Common myeloid progenitor, CD34-positive (primary cell): ENCODE measurements at regions of chr10 and their contacts with region 1.

Region 1: DNA sequence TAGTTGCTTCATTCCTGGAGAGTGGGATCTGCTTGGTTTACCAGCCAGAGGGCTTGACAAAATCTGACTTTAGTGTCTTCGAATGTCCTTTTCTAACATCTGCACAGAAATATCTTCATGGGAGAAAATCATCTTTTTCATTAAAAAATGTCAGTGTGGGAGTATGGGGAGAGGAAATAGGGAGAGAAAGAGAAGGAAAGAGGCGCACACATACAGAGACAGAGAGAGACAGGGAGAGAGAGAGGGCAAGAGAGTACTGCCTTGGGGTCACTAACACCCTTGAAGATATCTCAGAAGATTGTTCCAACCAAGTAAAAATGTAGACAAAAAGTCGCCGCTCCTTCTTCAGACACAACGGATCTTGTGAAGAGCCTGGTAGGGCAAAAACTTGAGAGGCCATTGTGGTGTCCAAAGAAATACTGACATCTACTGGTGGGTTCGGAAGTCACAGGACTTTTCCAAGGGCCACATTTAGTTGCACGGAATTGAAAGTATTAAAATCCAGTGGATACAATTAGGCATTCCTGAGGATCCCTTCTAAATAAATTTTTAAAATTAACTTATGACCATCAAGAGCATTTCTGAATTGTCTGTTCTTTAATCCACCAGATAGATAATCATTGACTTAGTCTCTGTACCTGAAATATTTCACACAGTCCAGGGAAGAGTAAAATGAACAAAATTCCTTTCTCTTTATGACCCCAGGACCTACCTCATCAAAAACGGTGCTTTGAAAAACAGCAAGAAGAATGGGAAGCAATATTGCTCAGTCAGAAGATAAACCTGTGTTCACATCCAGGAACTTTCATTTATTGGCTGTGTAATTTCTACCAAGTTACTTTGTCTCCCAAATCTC is 29.7 kb downstream of the VIM start:
- DNase-seq: peak; percentile 64 to 85 (median 79)
- H3K4me3 ChIP-seq: peak overlapping the region in 2 of 7 experiments; percentile 19 to 61
- H3K27ac ChIP-seq: no peak overlapping the region
- H3K4me1 ChIP-seq: no peaks in the 10 kb centered on the region
- H3K27me3 ChIP-seq: no peaks in the 10 kb centered on the region

Region 2: GRCh38 chr10:16828114-16828568 is 429.6 kb before region 1 on chr10:
- CTCF ChIA-PET with region 1: interaction called, 12 read pairs
- POLR2A ChIA-PET with region 1: no interaction called
- DNase-seq: peak; percentile 80 to 88 (median 85)
- H3K4me3 ChIP-seq: no peak overlapping the region
- H3K27ac ChIP-seq: no peak overlapping the region
- H3K4me1 ChIP-seq: peaks cover 0 to 27% (median 10%) of the 10 kb centered on the region in 4 experiments
- H3K27me3 ChIP-seq: peaks cover 0 to 2% (median 0%) of the 10 kb centered on the region in 5 experiments

Region 3: DNA sequence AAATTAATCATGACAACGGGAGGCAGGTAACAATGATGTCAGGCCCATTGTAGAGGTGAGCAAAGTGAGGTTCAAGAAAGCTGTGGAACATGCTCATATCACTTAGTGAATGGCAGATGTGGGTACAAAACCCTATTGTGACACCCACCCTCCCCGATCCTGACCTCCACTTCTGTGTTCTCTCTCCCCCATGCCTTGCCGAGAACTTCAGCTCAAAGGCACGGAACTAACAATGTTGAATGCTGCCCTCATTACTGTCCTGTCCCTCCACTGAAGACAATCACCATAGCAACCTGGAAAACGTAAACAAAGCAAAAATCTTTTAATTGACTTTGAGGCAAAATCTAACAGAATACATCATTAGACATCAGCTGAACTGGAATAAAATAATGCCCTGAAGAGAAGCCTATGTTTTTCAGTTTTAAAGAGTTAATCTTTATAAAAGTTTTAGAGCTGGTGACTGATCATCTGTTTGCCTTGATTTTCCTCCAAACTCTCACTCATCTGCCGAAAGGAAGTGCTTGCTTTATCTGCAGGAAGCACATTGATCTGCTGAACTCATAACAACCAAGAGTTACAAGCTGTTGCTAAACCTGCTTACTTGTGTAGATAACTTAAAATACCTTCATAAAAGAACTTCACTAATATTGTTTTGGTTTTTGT is 261.7 kb before region 1 on chr10:
- CTCF ChIA-PET with region 1: no interaction called
- POLR2A ChIA-PET with region 1: no interaction called
- DNase-seq: peak; percentile 97 to 100 (median 98)
- H3K4me3 ChIP-seq: peak overlapping the region in 4 of 7 experiments; percentile 12 to 63 (median 33)
- H3K27ac ChIP-seq: peak overlapping the region; percentile 96 to 97
- H3K4me1 ChIP-seq: peaks cover 5 to 47% (median 15%) of the 10 kb centered on the region in 4 experiments
- H3K27me3 ChIP-seq: no peaks in the 10 kb centered on the region

Region 4: DNA sequence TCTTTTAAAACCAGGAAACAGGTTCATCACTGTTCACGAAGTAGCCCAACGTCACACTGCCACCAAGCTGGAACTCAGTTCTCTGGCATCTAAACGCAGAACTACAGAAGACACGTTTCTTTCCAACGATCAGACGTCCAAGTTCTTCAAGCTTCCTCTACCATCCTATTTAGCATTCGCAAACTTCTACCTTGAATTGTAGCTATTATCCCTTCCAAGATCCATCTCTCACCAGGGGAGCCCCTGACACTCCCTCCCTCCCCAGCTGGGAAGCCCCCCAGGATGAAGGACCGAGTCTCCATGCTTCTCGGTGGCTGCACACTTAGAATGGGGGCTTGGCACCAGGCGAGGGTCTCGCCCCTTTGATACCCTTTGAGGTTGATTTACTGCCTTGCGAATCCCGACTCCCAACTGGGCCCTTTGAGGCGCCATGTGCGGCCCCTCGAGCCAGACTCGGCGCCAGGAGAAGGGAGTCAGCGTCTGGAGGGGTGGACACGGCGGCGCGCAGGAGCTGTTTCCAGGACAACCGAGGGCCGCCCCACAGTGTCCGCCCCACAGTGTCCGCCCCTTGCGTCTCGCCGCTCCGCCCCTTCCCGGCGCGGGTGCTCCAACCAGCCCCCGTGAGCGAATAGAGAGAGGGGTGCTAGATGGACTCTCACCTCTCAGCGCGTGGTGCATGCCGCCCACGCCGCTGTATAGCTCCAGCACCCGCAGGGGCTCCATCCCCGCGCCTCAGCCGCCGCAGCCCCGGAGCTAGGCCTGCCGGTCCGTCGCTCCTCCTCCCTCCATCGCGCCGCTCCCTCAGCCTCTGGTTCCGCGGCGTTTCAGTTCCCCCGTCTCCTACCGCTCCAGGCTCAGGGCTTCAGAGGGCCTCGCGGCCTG is 56.5 kb before region 1 on chr10 and contains the start of gene TRDMT1:
- CTCF ChIA-PET with region 1: no interaction called
- POLR2A ChIA-PET with region 1: no interaction called
- DNase-seq: peak; percentile 78 to 90 (median 83)
- H3K4me3 ChIP-seq: peak within 1 kb of the TSS; percentile 59 to 94 (median 84)
- H3K27ac ChIP-seq: peak within 1 kb of the TSS; percentile 94 to 98
- H3K4me1 ChIP-seq: peaks cover 10 to 43% (median 25%) of the 10 kb centered on the region in 4 experiments
- H3K27me3 ChIP-seq: no peaks in the 10 kb centered on the region

Region 5: DNA sequence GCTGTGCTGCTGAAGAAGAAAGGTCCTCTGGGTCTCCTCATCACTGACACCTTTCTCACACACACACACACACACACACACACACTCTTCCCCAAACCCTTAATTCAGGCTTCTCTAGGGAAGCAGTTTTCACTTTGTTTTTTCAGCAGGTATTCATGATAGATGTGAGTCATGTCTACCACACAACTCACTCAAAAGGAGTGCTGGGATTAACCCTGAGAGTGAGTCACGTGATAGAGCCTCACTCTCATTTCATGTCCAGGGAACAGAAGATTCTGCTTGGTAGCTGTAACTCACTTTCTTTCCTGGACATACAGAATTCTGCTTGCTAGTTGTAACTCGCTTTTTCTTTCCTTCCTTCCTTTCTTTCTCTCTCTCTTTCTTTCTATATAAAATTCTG is 15.7 kb after region 1 on chr10:
- CTCF ChIA-PET with region 1: interaction called, 11 read pairs
- POLR2A ChIA-PET with region 1: no interaction called
- DNase-seq: peak in 2 of 3 donors; percentile 25 to 35
- H3K4me3 ChIP-seq: no peak overlapping the region
- H3K27ac ChIP-seq: no peak overlapping the region
- H3K4me1 ChIP-seq: no peaks in the 10 kb centered on the region
- H3K27me3 ChIP-seq: no peaks in the 10 kb centered on the region

Region 6: GRCh38 chr10:17375936-17376584 is 118.4 kb after region 1 on chr10:
- CTCF ChIA-PET with region 1: no interaction called
- POLR2A ChIA-PET with region 1: no interaction called
- DNase-seq: peak in 2 of 3 donors; percentile 19 to 20
- H3K4me3 ChIP-seq: no peak overlapping the region
- H3K27ac ChIP-seq: no peak overlapping the region
- H3K4me1 ChIP-seq: no peaks in the 10 kb centered on the region
- H3K27me3 ChIP-seq: no peaks in the 10 kb centered on the region